ENCODE measurements at regions of chr20 and their contacts with region 1.

Region 1: DNA sequence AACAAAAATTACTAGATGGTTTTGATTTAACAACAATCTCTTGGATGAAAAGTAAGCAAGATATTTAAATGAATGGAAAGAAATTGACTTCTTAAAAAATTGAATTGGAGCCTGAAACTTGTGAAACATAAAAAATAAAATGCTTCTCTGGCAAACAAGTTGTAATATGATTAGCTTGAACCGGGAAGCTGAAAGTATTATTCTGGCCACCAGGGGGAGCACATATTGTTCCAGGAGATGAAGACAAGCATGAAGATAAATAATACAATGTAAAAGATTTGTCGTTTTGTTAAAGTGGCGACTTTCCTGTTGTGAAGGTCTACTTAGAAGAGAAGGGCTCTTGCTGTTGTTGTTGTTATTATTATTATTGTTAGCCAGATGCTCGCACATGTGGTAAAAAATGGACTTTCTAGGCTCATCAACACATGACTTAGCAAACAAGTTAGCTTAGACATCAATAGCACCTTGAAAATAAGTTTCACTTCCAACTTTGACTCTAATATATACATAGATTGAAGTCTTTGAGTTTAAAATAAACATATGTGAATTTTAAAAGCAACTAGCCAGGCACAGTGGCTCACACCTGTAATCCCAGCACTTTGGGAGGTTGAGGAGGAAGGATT is 14.2 kb downstream of the PAX1 start:
- DNase-seq: peak; percentile 72 to 81
- H3K4me3 ChIP-seq: no peak overlapping the region
- H3K4me3 Mint-ChIP-seq: no peak overlapping the region
- H3K27ac Mint-ChIP-seq: no peak overlapping the region
- H3K4me1 ChIP-seq: peaks cover 6% of the 10 kb centered on the region
- H3K4me1 Mint-ChIP-seq: no peaks in the 10 kb centered on the region
- H3K27me3 ChIP-seq: no peaks in the 10 kb centered on the region
- H3K27me3 Mint-ChIP-seq: peaks cover 8% of the 10 kb centered on the region
- CTCF ChIP-seq: peak; percentile 70 to 90

Region 2: DNA sequence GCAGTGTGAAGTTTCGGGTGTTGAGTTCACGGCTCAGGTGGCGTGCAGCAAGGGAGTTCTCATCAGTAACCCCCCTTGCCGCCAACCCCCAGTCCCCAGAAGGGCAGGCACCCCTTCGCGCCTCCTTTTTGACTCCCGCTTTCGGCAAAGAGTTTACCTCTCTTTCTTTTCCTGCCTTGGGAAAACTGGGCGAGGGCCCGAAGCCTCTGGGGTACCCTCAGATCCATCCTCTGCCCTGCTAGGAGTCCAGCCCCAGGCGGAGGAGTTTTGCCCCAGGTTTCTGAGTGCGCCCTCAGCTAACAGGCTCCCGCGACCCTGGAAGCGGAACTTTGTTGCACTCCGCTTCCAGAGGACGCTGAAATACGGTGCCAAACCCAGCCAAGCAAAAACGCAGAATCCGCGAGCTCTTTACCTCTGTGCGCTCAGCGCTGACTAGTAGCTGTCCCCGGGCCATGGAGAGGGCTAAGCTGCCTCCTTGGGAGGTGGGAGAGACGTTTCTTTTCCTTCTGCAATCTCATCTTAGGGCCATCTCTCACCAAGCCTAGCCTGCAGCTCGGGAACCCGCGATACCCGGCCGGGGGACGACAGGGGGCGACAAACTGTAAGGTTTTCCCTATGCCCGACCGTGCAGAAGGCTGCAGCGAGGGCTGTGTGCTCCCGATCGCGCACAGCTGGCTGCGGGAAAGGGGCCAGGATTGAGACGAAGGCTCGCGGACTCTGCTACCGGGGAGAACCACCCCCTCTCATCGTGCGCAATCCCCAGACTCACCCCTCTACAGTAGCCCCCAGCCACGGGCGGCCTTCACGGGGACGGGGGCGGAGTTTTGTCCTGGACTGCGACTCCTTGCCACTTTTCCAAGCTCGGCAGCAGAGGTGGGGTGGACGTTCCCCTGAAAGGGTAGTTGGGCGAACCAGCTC is 16.9 kb before region 1 on chr20:
- CTCF ChIA-PET with region 1: interaction called, 10 read pairs
- POLR2A ChIA-PET with region 1: no interaction called
- intact Hi-C with region 1: no loop called
- DNase-seq: peak in 1 of 2 experiments; percentile 63
- H3K4me3 ChIP-seq: no peak overlapping the region
- H3K4me3 Mint-ChIP-seq: peak overlapping the region; percentile 5
- H3K27ac Mint-ChIP-seq: no peak overlapping the region
- H3K4me1 ChIP-seq: no peaks in the 10 kb centered on the region
- H3K4me1 Mint-ChIP-seq: no peaks in the 10 kb centered on the region
- H3K27me3 ChIP-seq: no peaks in the 10 kb centered on the region
- H3K27me3 Mint-ChIP-seq: peaks cover 21% of the 10 kb centered on the region
- CTCF ChIP-seq: peak in 1 of 2 experiments; percentile 33

Region 3: DNA sequence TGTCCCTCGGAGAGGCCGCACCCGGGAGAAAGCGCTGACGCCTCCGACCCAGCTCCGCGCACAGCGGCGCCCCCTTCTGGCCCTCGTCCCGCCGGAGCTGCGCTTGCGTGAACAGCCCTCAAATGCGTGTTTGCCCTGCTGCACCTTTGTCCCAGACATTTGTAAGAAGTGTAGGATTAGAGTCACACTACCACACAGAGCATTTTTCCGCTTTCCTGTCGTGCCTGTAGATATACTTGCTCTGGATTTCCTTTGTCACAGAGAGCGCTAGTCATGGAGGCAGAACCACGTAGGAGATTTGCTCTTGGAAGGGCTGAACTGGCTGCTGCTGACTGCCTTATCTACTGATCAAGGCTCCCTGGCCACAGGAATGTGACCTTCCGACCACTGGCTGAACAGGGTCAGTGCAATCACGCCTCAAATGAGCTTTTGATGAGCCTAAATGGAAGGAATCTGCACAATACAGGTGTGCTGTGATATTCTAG is 48.1 kb after region 1 on chr20:
- CTCF ChIA-PET with region 1: interaction called, 57 read pairs
- POLR2A ChIA-PET with region 1: interaction called, 7 read pairs
- intact Hi-C with region 1: loop called (anchors 1 kb)
- DNase-seq: peak; percentile 88 to 92
- H3K4me3 ChIP-seq: peak overlapping the region; percentile 34
- H3K4me3 Mint-ChIP-seq: peak overlapping the region; percentile 65
- H3K27ac Mint-ChIP-seq: peak overlapping the region; percentile 63
- H3K4me1 ChIP-seq: peaks cover 5% of the 10 kb centered on the region; the same call in 1 of the 2 replicates
- H3K4me1 Mint-ChIP-seq: peaks cover 6% of the 10 kb centered on the region
- H3K27me3 ChIP-seq: no peaks in the 10 kb centered on the region
- H3K27me3 Mint-ChIP-seq: no peaks in the 10 kb centered on the region
- CTCF ChIP-seq: peak; percentile 86 to 92

Region 4: DNA sequence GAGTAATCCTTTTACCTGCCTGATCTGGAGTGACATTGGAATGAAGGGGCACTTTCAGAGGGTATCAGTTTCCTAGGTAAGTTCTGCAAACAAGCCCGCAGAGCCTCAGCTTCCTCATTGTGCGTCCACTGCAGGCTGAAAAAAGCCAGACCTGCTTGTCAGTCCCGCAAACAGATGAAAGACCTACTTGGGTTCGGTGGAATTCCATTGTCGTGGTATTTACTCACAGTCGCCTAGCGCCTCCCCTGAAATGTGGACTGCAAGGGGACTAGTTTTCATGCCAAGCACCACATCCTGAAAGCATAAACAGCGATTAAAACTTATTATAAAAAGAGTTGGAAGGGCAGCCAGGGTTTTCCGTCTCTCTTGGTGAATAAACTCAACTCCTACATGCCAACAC is 107.3 kb after region 1 on chr20:
- CTCF ChIA-PET with region 1: interaction called, 3 read pairs
- POLR2A ChIA-PET with region 1: no interaction called
- intact Hi-C with region 1: loop called (anchors 1 kb)
- DNase-seq: peak; percentile 48 to 52
- H3K4me3 ChIP-seq: no peak overlapping the region
- H3K4me3 Mint-ChIP-seq: no peak overlapping the region
- H3K27ac Mint-ChIP-seq: no peak overlapping the region
- H3K4me1 ChIP-seq: no peaks in the 10 kb centered on the region
- H3K4me1 Mint-ChIP-seq: peaks cover 5% of the 10 kb centered on the region
- H3K27me3 ChIP-seq: no peaks in the 10 kb centered on the region
- H3K27me3 Mint-ChIP-seq: peaks cover 3% of the 10 kb centered on the region
- CTCF ChIP-seq: peak in 1 of 2 experiments; percentile 37

Region 5: GRCh38 chr20:22106308-22106938 is 386.7 kb after region 1 on chr20:
- CTCF ChIA-PET with region 1: interaction called, 9 read pairs
- POLR2A ChIA-PET with region 1: no interaction called
- intact Hi-C with region 1: loop called (anchors 1 kb)
- DNase-seq: peak in 1 of 2 experiments; percentile 39
- H3K4me3 ChIP-seq: no peak overlapping the region
- H3K4me3 Mint-ChIP-seq: no peak overlapping the region
- H3K27ac Mint-ChIP-seq: no peak overlapping the region
- H3K4me1 ChIP-seq: no peaks in the 10 kb centered on the region
- H3K4me1 Mint-ChIP-seq: no peaks in the 10 kb centered on the region
- H3K27me3 ChIP-seq: no peaks in the 10 kb centered on the region
- H3K27me3 Mint-ChIP-seq: peaks cover 27% of the 10 kb centered on the region
- CTCF ChIP-seq: peak; percentile 55 to 71

Measured in Caco-2 (cell line).